ENCODE measurements at regions of chr5 and their contacts with region 1.

Region 1: GRCh38 chr5:93620487-93621326 is 37.7 kb downstream of the NR2F1 start:
- DNase-seq: peak; percentile 89

Region 2: GRCh38 chr5:93582677-93583438 is 37.8 kb before region 1 on chr5 and contains the start of gene NR2F1:
- in situ Hi-C with region 1: no loop called
- DNase-seq: peak; percentile 99
- total RNA-seq, gene NR2F1: 175 and 199 TPM in 2 replicates

Region 3: GRCh38 chr5:93658044-93658443 is 37.3 kb after region 1 on chr5:
- in situ Hi-C with region 1: no loop called
- DNase-seq: no peak

Region 4: GRCh38 chr5:93899026-93899600 is 278.4 kb after region 1 on chr5:
- in situ Hi-C with region 1: loop called (anchors 25 kb)
- DNase-seq: no peak

Region 5: DNA sequence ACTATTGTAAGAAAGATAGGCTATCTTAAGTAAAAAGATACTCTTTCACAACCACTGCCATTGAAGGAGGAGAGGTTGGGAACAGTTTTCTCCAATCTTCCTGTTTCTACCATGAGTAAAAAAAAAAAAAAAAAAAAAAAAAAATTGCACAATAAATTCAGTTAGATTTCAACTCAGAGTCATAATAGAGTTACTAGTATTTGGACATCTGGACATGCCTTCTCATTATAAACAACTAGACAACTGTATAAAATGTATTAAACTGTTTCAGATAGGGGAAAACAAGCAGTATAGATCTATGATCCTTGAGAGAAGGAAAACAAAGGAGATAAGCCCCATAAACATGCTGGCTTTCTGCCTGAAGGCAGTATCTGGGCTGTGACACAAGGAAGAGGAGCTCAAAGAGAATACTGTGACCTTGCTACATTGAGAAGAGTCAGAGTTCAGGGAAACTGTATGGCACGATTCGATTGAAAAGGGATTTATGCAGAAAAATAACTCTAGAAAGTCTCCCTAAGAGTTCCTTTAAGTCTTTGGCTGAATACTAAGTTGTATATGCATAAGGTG is 369.9 kb after region 1 on chr5:
- in situ Hi-C with region 1: no loop called
- DNase-seq: no peak

Measured in G401 (cell line).